CD4-positive, alpha-beta T cell (primary cell): ENCODE measurements at regions of chr1 and their contacts with region 1.

Region 1: GRCh38 chr1:160428655-160429054 is 28.3 kb downstream of the VANGL2 start:
- DNase-seq: peak in 10 of 14 experiments; percentile 15 to 82 (median 42)
- ATAC-seq: peak; percentile 76
- H3K4me3 ChIP-seq: no peak overlapping the region
- H3K4me3 Mint-ChIP-seq: peak overlapping the region; percentile 72
- H3K27ac ChIP-seq: peak overlapping the region; percentile 47 to 74
- H3K27ac Mint-ChIP-seq: peak overlapping the region; percentile 88
- H3K4me1 ChIP-seq: peaks cover 52% of the 10 kb centered on the region
- H3K4me1 Mint-ChIP-seq: peaks cover 63% of the 10 kb centered on the region
- H3K27me3 ChIP-seq: no peaks in the 10 kb centered on the region
- H3K27me3 Mint-ChIP-seq: no peaks in the 10 kb centered on the region
- CTCF ChIP-seq: peak; percentile 86

Region 2: GRCh38 chr1:160161965-160162705 is 266.5 kb before region 1 on chr1:
- CTCF ChIA-PET with region 1: no interaction called
- POLR2A ChIA-PET with region 1: no interaction called
- intact Hi-C with region 1: no loop called
- DNase-seq: no peak
- ATAC-seq: no peak
- H3K4me3 ChIP-seq: no peak overlapping the region
- H3K4me3 Mint-ChIP-seq: no peak overlapping the region
- H3K27ac ChIP-seq: no peak overlapping the region
- H3K27ac Mint-ChIP-seq: no peak overlapping the region
- H3K4me1 ChIP-seq: no peaks in the 10 kb centered on the region
- H3K4me1 Mint-ChIP-seq: no peaks in the 10 kb centered on the region
- H3K27me3 ChIP-seq: no peaks in the 10 kb centered on the region
- H3K27me3 Mint-ChIP-seq: peaks cover 18% of the 10 kb centered on the region
- CTCF ChIP-seq: no peak

Region 3: DNA sequence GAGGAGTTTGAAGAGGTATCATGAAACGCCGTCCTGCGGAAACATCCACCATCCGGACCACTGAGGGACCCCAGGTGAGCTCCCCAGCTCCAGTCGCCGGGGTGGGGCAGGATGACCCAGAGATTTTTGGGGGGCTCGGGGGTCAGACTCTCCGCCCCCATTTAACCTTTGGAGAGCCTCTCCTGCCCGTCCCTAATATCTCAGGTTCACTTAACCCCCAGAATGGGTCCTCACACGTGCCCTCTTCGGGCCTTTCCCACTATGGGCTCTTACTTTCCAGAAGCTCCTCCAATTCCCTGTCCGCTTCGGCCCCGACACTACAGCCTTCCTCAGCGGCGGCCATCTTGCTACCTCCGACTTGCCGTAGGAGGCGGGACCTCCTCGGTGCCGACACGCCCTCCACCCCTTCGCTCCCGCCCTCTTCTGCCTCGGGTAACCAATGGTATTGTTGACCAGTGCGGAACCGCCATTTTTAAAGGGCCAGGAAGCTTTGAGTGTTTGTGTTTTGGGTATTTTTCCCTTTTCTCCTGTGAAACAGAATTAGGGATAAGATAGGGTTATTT is 143.8 kb before region 1 on chr1 and contains the start of gene PEX19:
- CTCF ChIA-PET with region 1: no interaction called
- POLR2A ChIA-PET with region 1: no interaction called
- intact Hi-C with region 1: no loop called
- DNase-seq: peak; percentile 90 to 96 (median 92)
- ATAC-seq: peak; percentile 100
- H3K4me3 ChIP-seq: peak within 1 kb of the TSS; percentile 94
- H3K4me3 Mint-ChIP-seq: peak within 1 kb of the TSS; percentile 99
- H3K27ac ChIP-seq: peak within 1 kb of the TSS; percentile 37 to 60
- H3K27ac Mint-ChIP-seq: peak within 1 kb of the TSS; percentile 87
- H3K4me1 ChIP-seq: peaks cover 23% of the 10 kb centered on the region
- H3K4me1 Mint-ChIP-seq: peaks cover 35% of the 10 kb centered on the region
- H3K27me3 ChIP-seq: no peaks in the 10 kb centered on the region
- H3K27me3 Mint-ChIP-seq: no peaks in the 10 kb centered on the region
- CTCF ChIP-seq: no peak
- total RNA-seq, gene PEX19: 32.0 to 33.4 TPM

Region 4: DNA sequence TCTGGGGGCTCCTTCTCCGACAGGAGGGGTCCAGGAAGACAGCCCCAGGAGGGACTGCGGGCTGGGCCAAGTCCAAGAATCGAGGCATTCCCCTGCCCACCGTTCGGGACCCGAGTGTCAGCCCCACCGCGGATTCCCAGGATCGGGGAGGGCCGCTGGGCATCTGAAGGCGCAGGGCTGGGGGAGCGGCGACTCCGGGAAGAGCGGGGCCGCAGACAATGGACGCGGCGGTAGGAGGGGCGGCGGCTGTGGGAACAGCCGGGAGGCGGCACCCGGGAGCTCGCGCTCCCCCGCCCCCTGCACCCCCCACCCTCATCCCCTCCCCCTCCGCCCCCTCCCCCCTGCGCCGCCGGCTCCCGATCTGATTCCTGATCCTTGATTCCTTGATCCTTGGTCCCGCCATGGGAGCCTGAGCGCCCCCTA is 28.4 kb before region 1 on chr1 and contains the start of gene VANGL2:
- CTCF ChIA-PET with region 1: no interaction called
- POLR2A ChIA-PET with region 1: no interaction called
- intact Hi-C with region 1: no loop called
- DNase-seq: peak; percentile 16 to 66 (median 32)
- ATAC-seq: peak; percentile 65
- H3K4me3 ChIP-seq: peak within 1 kb of the TSS; percentile 44
- H3K4me3 Mint-ChIP-seq: peak within 1 kb of the TSS; percentile 71
- H3K27ac ChIP-seq: no peak within 1 kb of the TSS
- H3K27ac Mint-ChIP-seq: no peak within 1 kb of the TSS
- H3K4me1 ChIP-seq: peaks cover 15% of the 10 kb centered on the region
- H3K4me1 Mint-ChIP-seq: peaks cover 9% of the 10 kb centered on the region
- H3K27me3 ChIP-seq: peaks cover 17 to 26% of the 10 kb centered on the region in 2 experiments
- H3K27me3 Mint-ChIP-seq: peaks cover 43% of the 10 kb centered on the region
- CTCF ChIP-seq: no peak
- total RNA-seq, gene VANGL2: not detected

Region 5: GRCh38 chr1:160460683-160461287 is 32.1 kb after region 1 on chr1:
- CTCF ChIA-PET with region 1: no interaction called
- POLR2A ChIA-PET with region 1: no interaction called
- intact Hi-C with region 1: loop called in 1 of 2 experiments (anchors 5 kb)
- DNase-seq: peak in 3 of 14 experiments; percentile 29 to 38 (median 32)
- ATAC-seq: peak; percentile 41
- H3K4me3 ChIP-seq: peak overlapping the region; percentile 30
- H3K4me3 Mint-ChIP-seq: peak overlapping the region; percentile 57
- H3K27ac ChIP-seq: peak overlapping the region; percentile 33 to 51
- H3K27ac Mint-ChIP-seq: peak overlapping the region; percentile 63
- H3K4me1 ChIP-seq: peaks cover 23% of the 10 kb centered on the region
- H3K4me1 Mint-ChIP-seq: peaks cover 60% of the 10 kb centered on the region
- H3K27me3 ChIP-seq: no peaks in the 10 kb centered on the region
- H3K27me3 Mint-ChIP-seq: no peaks in the 10 kb centered on the region
- CTCF ChIP-seq: no peak

Region 6: DNA sequence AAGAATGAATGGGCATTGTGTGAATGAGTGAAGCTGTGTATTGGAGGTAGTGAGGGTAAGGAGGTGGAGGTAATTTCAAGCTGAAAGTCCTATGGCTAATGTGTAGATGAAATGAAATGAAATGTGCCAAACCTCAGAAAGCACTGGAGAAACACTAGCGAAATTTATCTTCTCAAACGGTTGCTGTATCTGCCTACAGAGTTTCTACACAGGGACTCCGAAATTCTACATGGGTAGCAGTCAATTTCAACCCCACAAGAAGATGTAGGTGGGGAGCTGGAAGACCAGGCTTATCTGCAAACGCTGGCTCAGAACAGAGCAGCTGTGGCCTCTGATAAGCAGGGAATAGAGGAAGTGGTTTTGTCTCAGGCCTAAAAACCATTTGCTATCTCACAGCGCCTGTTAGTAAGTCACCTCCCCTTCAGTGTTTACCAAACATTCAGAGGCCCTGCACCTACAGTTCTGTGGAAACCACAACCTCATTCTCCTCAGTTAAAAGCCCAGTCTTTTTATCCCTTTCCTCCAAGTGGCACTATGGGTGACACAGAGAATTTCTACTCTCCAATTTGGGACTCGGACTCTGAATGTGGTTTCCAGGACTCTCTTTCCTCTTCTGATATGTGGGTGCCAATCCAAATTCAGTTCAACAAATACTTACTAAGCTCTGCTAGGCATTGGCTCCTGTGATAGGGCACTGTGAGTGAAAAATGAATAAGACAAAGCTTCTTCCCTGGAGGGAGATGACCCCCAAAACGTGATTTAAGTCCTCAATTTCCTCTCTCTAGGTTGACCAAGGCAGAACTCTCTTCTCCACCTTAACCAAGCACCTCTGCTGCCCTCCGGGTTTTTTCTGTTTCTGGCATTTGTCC is 111.6 kb after region 1 on chr1:
- CTCF ChIA-PET with region 1: interaction called, 8 read pairs
- POLR2A ChIA-PET with region 1: interaction called, 8 read pairs
- intact Hi-C with region 1: loop called (anchors 1 to 5 kb)
- DNase-seq: peak in 12 of 14 experiments; percentile 19 to 91 (median 34)
- ATAC-seq: peak; percentile 90
- H3K4me3 ChIP-seq: peak overlapping the region; percentile 13
- H3K4me3 Mint-ChIP-seq: peak overlapping the region; percentile 59
- H3K27ac ChIP-seq: peak overlapping the region; percentile 54 to 68
- H3K27ac Mint-ChIP-seq: peak overlapping the region; percentile 88
- H3K4me1 ChIP-seq: peaks cover 55% of the 10 kb centered on the region
- H3K4me1 Mint-ChIP-seq: peaks cover 64% of the 10 kb centered on the region
- H3K27me3 ChIP-seq: no peaks in the 10 kb centered on the region
- H3K27me3 Mint-ChIP-seq: no peaks in the 10 kb centered on the region
- CTCF ChIP-seq: no peak

Region 7: DNA sequence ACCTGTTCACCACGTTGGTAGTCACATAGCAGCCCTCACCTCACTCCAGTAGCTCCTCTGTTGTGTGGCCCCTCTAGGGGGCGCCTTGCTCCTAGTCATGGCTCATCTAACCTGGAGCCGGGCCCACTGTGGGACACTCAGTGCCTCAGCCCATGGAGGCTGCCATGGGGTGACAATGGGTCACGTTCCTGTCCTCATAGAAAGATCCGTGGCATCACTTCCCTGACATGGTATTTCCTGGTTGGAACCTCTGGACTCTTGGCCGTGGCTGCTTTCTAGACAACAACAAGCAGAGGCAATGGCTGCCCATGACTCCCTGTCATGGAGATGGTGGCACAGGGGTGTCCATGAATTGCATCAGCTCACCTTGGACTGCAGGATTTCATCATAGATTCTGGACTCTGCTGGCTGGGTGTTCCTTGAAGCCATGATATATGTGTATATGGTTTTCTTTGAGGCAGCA is 121.9 kb after region 1 on chr1:
- CTCF ChIA-PET with region 1: no interaction called
- POLR2A ChIA-PET with region 1: interaction called, 4 read pairs
- intact Hi-C with region 1: loop called in 1 of 2 experiments (anchors 2 kb)
- DNase-seq: peak; percentile 34 to 78 (median 54)
- ATAC-seq: peak; percentile 71
- H3K4me3 ChIP-seq: no peak overlapping the region
- H3K4me3 Mint-ChIP-seq: no peak overlapping the region
- H3K27ac ChIP-seq: no peak overlapping the region
- H3K27ac Mint-ChIP-seq: peak overlapping the region; percentile 58
- H3K4me1 ChIP-seq: peaks cover 14% of the 10 kb centered on the region
- H3K4me1 Mint-ChIP-seq: peaks cover 33% of the 10 kb centered on the region
- H3K27me3 ChIP-seq: no peaks in the 10 kb centered on the region
- H3K27me3 Mint-ChIP-seq: no peaks in the 10 kb centered on the region
- CTCF ChIP-seq: peak; percentile 53

Region 8: GRCh38 chr1:160774886-160775719 is 346.4 kb after region 1 on chr1:
- CTCF ChIA-PET with region 1: no interaction called
- POLR2A ChIA-PET with region 1: no interaction called
- intact Hi-C with region 1: no loop called
- DNase-seq: no peak
- ATAC-seq: no peak
- H3K4me3 ChIP-seq: no peak overlapping the region
- H3K4me3 Mint-ChIP-seq: no peak overlapping the region
- H3K27ac ChIP-seq: no peak overlapping the region
- H3K27ac Mint-ChIP-seq: no peak overlapping the region
- H3K4me1 ChIP-seq: peaks cover 15% of the 10 kb centered on the region
- H3K4me1 Mint-ChIP-seq: peaks cover 12% of the 10 kb centered on the region
- H3K27me3 ChIP-seq: no peaks in the 10 kb centered on the region
- H3K27me3 Mint-ChIP-seq: no peaks in the 10 kb centered on the region
- CTCF ChIP-seq: no peak